H1 (cell line): ENCODE measurements at regions of chr1 and their contacts with region 1.

Region 1: DNA sequence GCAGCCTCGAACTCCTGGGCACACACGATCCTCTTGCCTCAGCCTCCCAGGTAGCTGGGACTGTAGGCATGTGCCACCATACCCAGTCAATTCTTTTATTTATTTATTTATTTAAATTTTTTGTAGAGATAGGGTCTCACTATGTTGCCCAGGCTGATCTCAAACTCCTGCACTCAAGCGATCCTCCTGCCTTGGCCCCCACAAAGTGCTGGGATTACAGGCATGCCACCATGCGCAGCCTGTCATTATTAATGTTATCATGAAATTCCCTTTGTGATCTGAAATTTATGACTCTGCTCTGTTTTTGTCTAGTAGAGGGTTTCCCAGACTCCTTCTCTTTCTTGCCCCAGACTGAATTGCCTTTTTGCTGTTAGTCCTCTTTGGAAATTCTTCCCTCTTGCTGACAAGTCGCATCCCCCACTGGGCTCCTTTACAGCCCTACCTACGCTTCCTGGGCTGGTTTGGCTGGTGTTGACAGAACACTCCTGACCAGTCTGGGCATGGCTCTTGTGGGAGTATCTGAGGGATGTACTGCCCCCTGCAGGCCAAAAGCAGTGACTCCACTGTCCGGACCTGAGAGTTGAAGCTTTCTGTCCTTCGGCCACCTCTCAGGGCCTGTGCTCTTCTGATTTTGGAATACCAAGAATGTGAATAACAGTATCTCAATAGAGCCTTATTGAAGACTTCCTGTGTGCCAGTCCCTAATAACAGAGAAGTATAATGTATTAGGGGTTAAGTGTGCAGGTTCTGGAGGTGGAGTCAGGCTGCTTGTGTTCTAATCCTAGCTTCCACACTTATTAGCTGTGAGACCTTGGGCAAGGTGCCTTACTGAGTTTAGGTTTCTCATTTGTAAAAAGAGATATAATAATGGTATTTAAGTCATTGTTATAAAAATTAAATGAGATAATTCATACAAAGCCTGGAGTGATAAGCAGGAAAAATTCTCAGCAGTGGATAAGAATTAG is 28.2 kb downstream of the TCEANC2 start:
- DNase-seq: peak; percentile 85 to 88
- H3K4me3 ChIP-seq: no peak overlapping the region
- H3K27ac ChIP-seq: no peak overlapping the region
- H3K4me1 ChIP-seq: no peaks in the 10 kb centered on the region
- H3K27me3 ChIP-seq: no peaks in the 10 kb centered on the region
- CTCF ChIP-seq: peak; percentile 85 to 98 (median 95)
- EP300 ChIP-seq: no peak
- POLR2A ChIP-seq: no peak
- RAD21 ChIP-seq: peak; percentile 73 to 82

Region 2: GRCh38 chr1:53919675-53920066 is 161.9 kb before region 1 on chr1:
- CTCF ChIA-PET with region 1: no interaction called
- POLR2A ChIA-PET with region 1: no interaction called
- DNase-seq: no peak
- H3K4me3 ChIP-seq: no peak overlapping the region
- H3K27ac ChIP-seq: no peak overlapping the region
- H3K4me1 ChIP-seq: 0 out of 7 replicates have a peak, but pooled peaks cover 0 to 2% (median 0%) of the 10 kb centered on the region in 4 experiments
- H3K27me3 ChIP-seq: no peaks in the 10 kb centered on the region
- CTCF ChIP-seq: no peak
- EP300 ChIP-seq: no peak
- POLR2A ChIP-seq: no peak
- RAD21 ChIP-seq: no peak

Region 3: GRCh38 chr1:53992085-53992874 is 89.3 kb before region 1 on chr1:
- CTCF ChIA-PET with region 1: interaction called, 14 read pairs
- POLR2A ChIA-PET with region 1: no interaction called
- DNase-seq: no peak
- H3K4me3 ChIP-seq: no peak overlapping the region
- H3K27ac ChIP-seq: no peak overlapping the region
- H3K4me1 ChIP-seq: no peaks in the 10 kb centered on the region
- H3K27me3 ChIP-seq: no peaks in the 10 kb centered on the region
- CTCF ChIP-seq: peak; percentile 59 to 80 (median 60)
- EP300 ChIP-seq: no peak
- POLR2A ChIP-seq: no peak
- RAD21 ChIP-seq: peak; percentile 76 to 78

Region 4: GRCh38 chr1:54041806-54042205 is 39.8 kb before region 1 on chr1:
- CTCF ChIA-PET with region 1: no interaction called
- POLR2A ChIA-PET with region 1: no interaction called
- DNase-seq: no peak
- H3K4me3 ChIP-seq: no peak overlapping the region
- H3K27ac ChIP-seq: no peak overlapping the region
- H3K4me1 ChIP-seq: no peaks in the 10 kb centered on the region
- H3K27me3 ChIP-seq: no peaks in the 10 kb centered on the region
- CTCF ChIP-seq: no peak
- EP300 ChIP-seq: no peak
- POLR2A ChIP-seq: no peak
- RAD21 ChIP-seq: no peak

Region 5: DNA sequence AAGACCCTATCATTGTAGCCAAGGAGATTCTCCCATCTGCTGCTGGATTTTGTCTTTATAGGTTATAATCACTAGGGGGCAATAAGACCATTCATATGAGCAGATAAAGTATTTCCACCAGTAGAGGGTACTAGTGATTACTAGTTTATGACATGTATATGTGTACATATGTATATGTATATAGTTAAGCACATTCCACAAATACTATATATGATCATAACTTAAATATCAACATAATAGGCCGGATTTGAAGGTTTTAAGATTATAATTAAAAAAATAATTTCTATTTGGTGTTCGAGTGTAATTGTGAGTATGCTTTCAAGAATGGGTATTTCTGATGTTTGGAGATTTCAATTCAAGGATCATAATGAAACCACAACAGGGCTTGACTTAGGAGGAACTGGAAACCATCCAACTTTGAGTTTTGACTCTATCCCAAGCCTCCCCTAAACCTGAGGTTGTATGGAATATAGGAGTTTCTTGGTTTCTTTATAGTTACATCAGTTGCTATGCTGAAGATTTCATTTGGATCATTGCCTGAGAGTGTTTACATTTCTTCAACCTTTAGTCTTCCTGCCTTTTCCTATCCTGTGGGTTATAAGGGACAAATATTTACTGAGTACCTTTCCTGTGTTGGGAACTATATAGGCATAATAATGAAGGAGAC is 11.3 kb before region 1 on chr1:
- CTCF ChIA-PET with region 1: interaction called, 65 read pairs
- POLR2A ChIA-PET with region 1: no interaction called
- DNase-seq: no peak
- H3K4me3 ChIP-seq: no peak overlapping the region
- H3K27ac ChIP-seq: no peak overlapping the region
- H3K4me1 ChIP-seq: no peaks in the 10 kb centered on the region
- H3K27me3 ChIP-seq: no peaks in the 10 kb centered on the region
- CTCF ChIP-seq: peak in 2 of 3 experiments; percentile 60 to 93; a peak in 3 of 4 replicates
- EP300 ChIP-seq: no peak
- POLR2A ChIP-seq: no peak
- RAD21 ChIP-seq: peak; percentile 57 to 73

Region 6: DNA sequence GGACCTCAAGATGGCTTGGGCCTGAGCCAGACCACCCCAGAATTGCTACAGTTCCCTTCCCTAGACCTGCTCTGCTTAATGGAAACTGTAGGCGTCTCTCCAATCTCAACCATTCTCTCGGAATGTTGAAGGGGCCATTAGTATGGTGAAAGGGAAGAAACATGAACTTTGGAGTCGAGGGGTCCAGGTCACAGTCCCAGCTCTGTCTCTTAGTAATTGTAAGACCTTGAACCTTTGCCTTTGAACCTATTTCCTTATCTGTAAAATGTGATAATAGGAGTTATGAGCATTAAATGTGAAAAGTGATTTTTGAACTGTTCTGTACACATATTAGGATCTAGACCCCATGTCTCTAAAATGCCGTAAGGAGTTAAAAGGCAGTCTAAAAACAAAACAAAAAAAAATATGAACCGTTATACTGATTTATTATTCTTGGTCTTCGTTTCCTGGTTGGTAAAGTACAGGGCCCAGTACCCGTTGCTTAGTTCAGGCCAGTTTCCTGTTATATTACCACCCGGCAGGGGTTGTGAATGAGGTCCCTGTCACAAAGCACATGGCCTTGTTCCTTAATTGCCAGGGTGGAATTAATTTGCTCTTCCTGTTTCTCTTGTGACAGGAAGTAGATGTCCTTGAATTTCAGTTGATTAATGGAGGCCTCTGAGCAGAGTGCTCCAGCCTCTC is 14.1 kb after region 1 on chr1:
- CTCF ChIA-PET with region 1: interaction called, 11 read pairs
- POLR2A ChIA-PET with region 1: no interaction called
- DNase-seq: no peak
- H3K4me3 ChIP-seq: no peak overlapping the region
- H3K27ac ChIP-seq: no peak overlapping the region
- H3K4me1 ChIP-seq: no peaks in the 10 kb centered on the region; a peak in 1 of 7 replicates
- H3K27me3 ChIP-seq: no peaks in the 10 kb centered on the region
- CTCF ChIP-seq: no peak
- EP300 ChIP-seq: no peak
- POLR2A ChIP-seq: no peak
- RAD21 ChIP-seq: peak; percentile 14 to 23; a peak in 1 of 4 replicates

Region 7: GRCh38 chr1:54110996-54111395 is 29.4 kb after region 1 on chr1:
- CTCF ChIA-PET with region 1: interaction called, 19 read pairs
- POLR2A ChIA-PET with region 1: no interaction called
- DNase-seq: peak in 1 of 2 experiments; percentile 37
- H3K4me3 ChIP-seq: no peak overlapping the region
- H3K27ac ChIP-seq: no peak overlapping the region
- H3K4me1 ChIP-seq: no peaks in the 10 kb centered on the region; a peak in 1 of 7 replicates
- H3K27me3 ChIP-seq: no peaks in the 10 kb centered on the region; a peak in 1 of 7 replicates
- CTCF ChIP-seq: no peak
- EP300 ChIP-seq: no peak
- POLR2A ChIP-seq: no peak
- RAD21 ChIP-seq: no peak

Region 8: DNA sequence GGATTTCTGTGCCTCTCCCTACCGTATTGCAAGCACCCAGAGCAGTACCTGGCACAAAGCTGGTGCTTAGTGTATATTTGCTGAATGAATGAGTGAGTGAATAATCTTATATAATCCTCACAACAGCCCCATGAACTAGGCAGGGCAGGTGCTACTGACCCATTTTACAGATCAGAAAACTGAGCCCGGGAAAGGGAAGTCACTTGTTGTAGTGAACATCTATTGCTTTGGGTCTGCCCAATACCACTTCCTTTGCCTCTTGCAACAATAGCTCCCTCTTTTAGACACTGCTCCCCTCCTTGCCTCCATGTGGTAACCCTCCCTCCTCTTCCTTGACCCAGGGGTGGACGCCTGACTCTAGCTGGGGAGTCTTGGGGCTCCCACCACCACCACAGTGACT is 68.1 kb after region 1 on chr1:
- CTCF ChIA-PET with region 1: no interaction called
- POLR2A ChIA-PET with region 1: no interaction called
- DNase-seq: no peak
- H3K4me3 ChIP-seq: no peak overlapping the region
- H3K27ac ChIP-seq: no peak overlapping the region
- H3K4me1 ChIP-seq: no peaks in the 10 kb centered on the region; a peak in 2 of 7 replicates
- H3K27me3 ChIP-seq: no peaks in the 10 kb centered on the region
- CTCF ChIP-seq: no peak
- EP300 ChIP-seq: no peak
- POLR2A ChIP-seq: no peak
- RAD21 ChIP-seq: no peak

Region 9: DNA sequence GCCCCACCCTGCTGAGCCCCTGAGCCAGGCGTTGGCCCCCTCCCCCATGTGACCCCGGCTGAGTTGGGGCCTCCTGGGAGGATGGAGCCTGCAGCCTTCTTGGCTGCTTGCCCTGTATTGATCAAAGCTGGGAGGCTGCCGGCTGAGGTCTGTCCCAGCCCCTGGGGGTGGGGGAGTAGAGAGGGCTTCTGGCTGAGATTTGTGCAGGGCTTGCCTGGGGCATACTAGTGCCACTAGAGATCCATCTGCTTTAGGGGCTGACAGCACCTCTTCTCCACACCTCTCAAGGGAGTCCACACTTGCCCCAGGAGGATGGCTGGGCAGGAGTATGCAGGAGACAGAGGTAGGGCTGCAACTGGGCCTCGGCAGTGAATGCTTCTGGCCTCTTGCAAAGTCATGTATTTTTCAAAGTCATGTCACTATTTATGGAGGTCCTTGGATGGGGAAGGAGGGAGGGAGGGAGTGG is 378.2 kb after region 1 on chr1:
- CTCF ChIA-PET with region 1: no interaction called
- POLR2A ChIA-PET with region 1: no interaction called
- DNase-seq: no peak
- H3K4me3 ChIP-seq: no peak overlapping the region
- H3K27ac ChIP-seq: no peak overlapping the region
- H3K4me1 ChIP-seq: peaks cover 9 to 34% (median 17%) of the 10 kb centered on the region in 4 experiments
- H3K27me3 ChIP-seq: no peaks in the 10 kb centered on the region
- CTCF ChIP-seq: no peak
- EP300 ChIP-seq: no peak
- POLR2A ChIP-seq: no peak
- RAD21 ChIP-seq: no peak